ENCODE measurements at regions of chr14 and their contacts with region 1.

Region 1: DNA sequence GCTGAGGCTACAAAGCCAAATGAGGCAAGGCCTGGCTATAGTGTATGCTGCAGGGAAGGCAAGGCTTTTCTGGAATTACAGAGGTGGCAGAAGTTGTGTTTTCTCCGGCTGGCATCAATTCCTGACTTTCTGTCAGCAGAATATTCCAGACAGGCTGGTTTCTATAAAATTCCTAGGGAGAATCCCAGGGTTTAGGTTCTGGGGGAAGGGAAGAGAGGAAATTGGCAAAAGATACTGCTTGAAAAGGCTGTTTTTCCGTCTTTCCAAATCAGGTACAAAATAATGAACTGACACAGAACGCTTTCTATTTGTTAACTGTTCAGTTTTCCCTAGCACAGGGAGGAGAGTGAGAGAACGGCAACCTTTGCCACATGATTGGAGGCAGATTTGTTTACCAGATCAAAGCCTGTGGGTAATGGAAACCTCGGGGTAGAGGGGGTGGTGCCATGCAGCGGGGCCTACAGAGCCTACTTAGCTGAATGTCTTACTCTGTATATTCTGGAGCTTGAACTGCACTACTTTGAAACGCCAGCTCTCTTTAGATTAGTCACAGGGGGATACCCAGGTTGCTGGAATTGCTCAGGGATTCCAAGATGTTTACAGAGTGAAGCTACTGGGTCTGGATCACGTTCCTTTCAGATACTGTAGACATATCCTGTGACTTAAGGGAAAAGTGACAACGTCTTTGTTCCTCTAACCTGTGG is 65.8 kb upstream of the DACT1 start:
- DNase-seq: peak; percentile 10 to 51 (median 26)
- H3K4me3 ChIP-seq: no peak overlapping the region
- H3K4me3 Mint-ChIP-seq: peak overlapping the region in 7 of 8 donors; percentile 5 to 60 (median 49)
- H3K27ac ChIP-seq: no peak overlapping the region
- H3K27ac Mint-ChIP-seq: peak overlapping the region; percentile 26 to 87 (median 65)
- H3K4me1 ChIP-seq: peaks cover 12% of the 10 kb centered on the region
- H3K4me1 Mint-ChIP-seq: peaks cover 10 to 21% (median 15%) of the 10 kb centered on the region in 4 donors
- H3K27me3 ChIP-seq: no peaks in the 10 kb centered on the region
- H3K27me3 Mint-ChIP-seq: no peaks in the 10 kb centered on the region

Region 2: GRCh38 chr14:58048219-58048618 is 523.7 kb before region 1 on chr14:
- CTCF ChIA-PET with region 1: no interaction called
- POLR2A ChIA-PET with region 1: no interaction called
- intact Hi-C with region 1: no loop called
- DNase-seq: no peak
- H3K4me3 ChIP-seq: no peak overlapping the region
- H3K4me3 Mint-ChIP-seq: no peak overlapping the region
- H3K27ac ChIP-seq: no peak overlapping the region
- H3K27ac Mint-ChIP-seq: no peak overlapping the region
- H3K4me1 ChIP-seq: no peaks in the 10 kb centered on the region
- H3K4me1 Mint-ChIP-seq: peaks cover 0 to 1% (median 0%) of the 10 kb centered on the region in 4 donors
- H3K27me3 ChIP-seq: no peaks in the 10 kb centered on the region
- H3K27me3 Mint-ChIP-seq: peaks cover 1 to 6% of the 10 kb centered on the region in 2 donors

Region 3: DNA sequence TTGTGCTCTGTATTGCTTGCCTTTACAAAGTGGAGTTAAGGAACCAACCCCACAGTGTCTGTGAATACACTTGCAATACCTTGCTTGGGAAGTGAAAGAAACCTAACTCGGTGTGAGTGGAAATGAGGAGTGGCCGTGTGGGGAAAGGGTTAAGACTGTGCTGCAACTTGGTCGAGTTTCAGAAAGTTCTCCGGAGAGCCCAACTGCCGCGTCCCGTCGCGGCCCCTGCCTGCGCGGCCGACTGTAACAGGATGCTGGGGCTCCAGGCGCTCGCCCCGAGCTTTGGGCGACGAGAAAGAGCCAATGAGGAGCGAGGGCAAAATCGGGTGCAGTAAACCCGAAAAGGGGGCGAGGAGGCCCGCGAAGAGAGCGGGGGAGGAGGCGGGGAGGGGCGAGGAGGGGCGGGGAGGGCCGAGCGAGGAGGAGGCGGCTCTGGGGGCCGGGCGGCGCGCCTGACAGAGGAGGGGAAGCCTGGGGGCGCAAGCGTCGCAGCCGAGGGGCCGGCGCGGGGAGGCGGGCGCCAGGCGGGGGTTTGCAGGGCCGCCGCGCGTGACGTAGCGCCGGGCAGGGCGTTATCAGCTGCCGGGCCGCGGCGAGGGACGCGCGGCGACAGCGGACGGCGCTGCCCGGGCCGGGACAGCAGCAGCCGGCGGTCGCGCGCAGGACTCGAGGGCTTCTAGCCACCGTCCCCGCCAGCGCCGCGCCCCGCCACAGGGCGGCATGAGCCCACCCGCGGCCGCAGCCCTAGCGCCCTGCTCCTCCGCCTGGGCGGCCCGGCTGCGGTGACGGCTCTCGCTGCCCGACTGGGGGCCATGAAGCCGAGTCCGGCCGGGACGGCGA is 65.7 kb after region 1 on chr14 and contains the start of gene DACT1:
- CTCF ChIA-PET with region 1: no interaction called
- POLR2A ChIA-PET with region 1: no interaction called
- intact Hi-C with region 1: loop called (anchors 5 kb)
- DNase-seq: peak; percentile 16 to 40 (median 19)
- H3K4me3 ChIP-seq: peak within 1 kb of the TSS in 1 of 2 donors; percentile 5
- H3K4me3 Mint-ChIP-seq: peak within 1 kb of the TSS; percentile 76 to 92 (median 88)
- H3K27ac ChIP-seq: no peak within 1 kb of the TSS
- H3K27ac Mint-ChIP-seq: peak within 1 kb of the TSS in 4 of 7 donors; percentile 52 to 82 (median 66)
- H3K4me1 ChIP-seq: peaks cover 9% of the 10 kb centered on the region
- H3K4me1 Mint-ChIP-seq: peaks cover 6 to 29% (median 18%) of the 10 kb centered on the region in 4 donors
- H3K27me3 ChIP-seq: peaks cover 23% of the 10 kb centered on the region
- H3K27me3 Mint-ChIP-seq: peaks cover 31 to 44% of the 10 kb centered on the region in 2 donors
- total RNA-seq, gene DACT1: 1.4 to 1.8 TPM

Region 4: GRCh38 chr14:58656671-58657411 is 84.9 kb after region 1 on chr14:
- CTCF ChIA-PET with region 1: no interaction called
- POLR2A ChIA-PET with region 1: no interaction called
- intact Hi-C with region 1: no loop called
- DNase-seq: no peak
- H3K4me3 ChIP-seq: no peak overlapping the region
- H3K4me3 Mint-ChIP-seq: no peak overlapping the region
- H3K27ac ChIP-seq: no peak overlapping the region
- H3K27ac Mint-ChIP-seq: no peak overlapping the region
- H3K4me1 ChIP-seq: no peaks in the 10 kb centered on the region
- H3K4me1 Mint-ChIP-seq: peaks cover 0 to 3% (median 0%) of the 10 kb centered on the region in 4 donors
- H3K27me3 ChIP-seq: no peaks in the 10 kb centered on the region
- H3K27me3 Mint-ChIP-seq: peaks cover 3% of the 10 kb centered on the region in 2 donors